ENCODE measurements at regions of chr3 and their contacts with region 1.

Region 1: DNA sequence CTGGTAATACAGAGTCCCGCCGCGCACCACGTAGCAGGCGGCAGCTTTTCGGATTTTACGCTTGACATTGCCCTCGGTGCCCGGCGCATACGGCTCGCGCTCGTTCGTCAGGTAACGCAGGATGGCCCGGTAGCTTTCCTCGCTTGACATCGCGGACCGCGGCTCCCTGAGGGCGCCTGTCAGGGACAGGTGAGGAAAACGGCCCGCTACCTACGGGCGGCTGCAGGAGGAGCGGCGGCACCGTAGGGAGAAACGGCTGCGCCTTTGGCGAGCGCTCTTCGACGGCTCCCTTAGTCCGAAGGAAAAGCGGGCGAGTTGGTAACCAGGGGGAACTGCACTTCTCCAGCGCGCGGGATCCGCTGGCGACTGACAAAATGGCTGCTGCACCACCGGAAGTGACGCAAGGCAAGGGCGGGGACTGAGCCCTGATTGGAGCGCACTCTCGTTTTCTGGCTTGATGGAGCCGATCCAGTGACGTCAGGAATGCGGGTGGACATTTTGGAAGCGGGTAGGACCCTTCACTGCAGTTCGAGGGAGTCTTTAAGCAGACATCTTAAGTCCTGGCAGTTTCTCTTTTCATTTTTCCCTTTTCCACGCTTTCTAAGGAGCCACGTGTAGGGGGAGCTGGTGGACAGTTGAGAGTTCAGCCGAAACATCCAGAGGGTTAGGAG is at the start of gene ZBTB11:
- DNase-seq: peak; percentile 100
- H3K4me3 ChIP-seq: peak within 1 kb of the TSS; percentile 81 to 93 (median 88)
- H3K27ac ChIP-seq: peak within 1 kb of the TSS; percentile 84 to 98 (median 97)
- H3K4me1 ChIP-seq: peaks cover 10 to 18% of the 10 kb centered on the region in 2 donors
- H3K27me3 ChIP-seq: no peaks in the 10 kb centered on the region
- CTCF ChIP-seq: peak in 5 of 6 experiments; percentile 11 to 66 (median 59)
- POLR2A ChIP-seq: peak; percentile 74 to 87
- total RNA-seq, gene ZBTB11: 28.0 to 43.6 (median 35.9) TPM

Region 2: DNA sequence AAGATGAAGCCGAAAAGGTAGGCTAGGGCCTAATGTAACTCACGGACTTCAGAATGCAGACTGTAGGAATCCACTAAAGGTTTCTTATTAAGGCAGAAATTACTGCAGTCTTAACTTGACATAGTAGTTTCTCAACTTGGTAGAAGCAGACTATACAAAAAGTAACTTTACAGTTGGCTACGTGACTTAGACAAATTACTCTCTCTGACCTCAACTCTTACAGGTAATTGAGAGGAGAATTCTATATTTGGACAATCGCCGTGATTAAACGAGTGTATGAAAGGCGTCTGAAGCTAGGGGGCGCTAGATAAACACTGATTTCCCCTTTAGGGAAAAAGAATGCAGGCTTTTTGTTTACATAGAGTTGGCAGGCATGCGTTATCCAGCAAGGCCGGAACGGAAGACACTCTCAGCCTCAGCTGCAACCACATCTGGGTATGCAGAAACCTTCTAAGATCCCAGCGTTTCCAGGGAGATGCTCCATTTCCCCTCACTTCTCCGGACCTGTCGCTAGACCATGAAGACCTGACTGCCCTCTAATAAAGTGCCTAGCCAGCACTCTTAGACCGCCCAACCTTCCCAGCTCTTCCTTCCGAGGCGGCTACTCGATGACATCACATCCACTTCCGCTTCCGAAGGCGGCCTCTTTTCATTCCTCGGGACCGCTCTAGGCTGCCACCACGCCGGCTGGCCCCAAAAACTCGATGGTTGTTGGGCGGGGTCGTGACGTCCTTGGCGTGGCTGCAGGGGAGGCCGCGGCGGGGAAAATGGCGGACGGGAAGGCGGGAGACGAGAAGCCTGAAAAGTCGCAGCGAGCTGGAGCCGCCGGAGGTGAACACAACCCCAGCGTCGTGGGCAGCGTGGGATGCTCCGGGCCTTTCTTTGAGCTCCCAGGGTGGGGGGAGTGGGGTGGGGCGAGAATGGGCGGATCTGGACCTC is 103.2 kb before region 1 on chr3 and contains the start of gene PCNP:
- intact Hi-C with region 1: loop called (anchors 5 kb)
- DNase-seq: peak; percentile 98 to 99
- H3K4me3 ChIP-seq: peak within 1 kb of the TSS; percentile 46 to 89 (median 78)
- H3K27ac ChIP-seq: peak within 1 kb of the TSS; percentile 95 to 97 (median 95)
- H3K4me1 ChIP-seq: peaks cover 5 to 18% of the 10 kb centered on the region in 2 donors
- H3K27me3 ChIP-seq: no peaks in the 10 kb centered on the region
- CTCF ChIP-seq: peak; percentile 68 to 98 (median 87)
- POLR2A ChIP-seq: peak; percentile 38 to 90
- total RNA-seq, gene PCNP: 93.4 to 145 (median 123) TPM

Region 3: DNA sequence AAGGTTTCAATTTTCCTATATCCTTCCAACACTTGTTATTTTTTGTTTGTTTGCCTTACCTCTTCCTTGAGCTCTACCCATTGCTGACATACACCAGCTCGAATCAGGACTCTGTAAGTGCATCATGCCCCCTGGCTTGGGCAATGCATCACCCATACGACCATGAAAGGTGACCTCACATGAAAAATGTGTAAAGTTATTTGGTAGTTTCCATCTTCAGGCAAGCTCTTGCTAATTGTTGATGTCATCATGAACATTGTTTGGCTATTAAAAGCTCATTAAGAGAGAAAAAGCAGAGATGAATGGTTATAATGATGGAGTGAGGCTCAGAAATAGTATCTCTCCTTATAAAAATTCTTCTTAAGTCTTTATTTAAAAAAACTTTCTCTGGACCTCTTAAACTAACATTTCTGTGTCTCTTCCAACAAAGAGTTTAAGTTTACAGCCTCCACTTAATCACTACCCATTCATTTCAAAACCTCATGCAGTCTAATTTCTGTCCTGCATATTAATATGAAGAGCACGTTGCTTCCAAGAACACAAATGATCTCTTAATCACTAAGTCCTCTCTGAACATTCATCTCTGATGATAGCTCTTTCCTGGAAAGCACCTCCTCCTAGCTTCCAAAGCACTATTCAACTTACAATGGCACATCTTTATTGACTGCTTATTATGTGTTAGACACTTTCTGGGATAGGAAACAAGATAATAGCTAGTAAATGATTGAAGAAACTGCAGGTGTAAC is 408.7 kb after region 1 on chr3:
- intact Hi-C with region 1: no loop called
- DNase-seq: no peak
- H3K4me3 ChIP-seq: no peak overlapping the region
- H3K27ac ChIP-seq: no peak overlapping the region
- H3K4me1 ChIP-seq: peaks cover 3 to 19% of the 10 kb centered on the region in 2 donors
- H3K27me3 ChIP-seq: no peaks in the 10 kb centered on the region
- CTCF ChIP-seq: no peak
- POLR2A ChIP-seq: no peak

Measured in thyroid gland (tissue), 4 donors.